ENCODE measurements at regions of chr7 and their contacts with region 1.

Region 1: GRCh38 chr7:117119192-117119924 is 166.1 kb downstream of the ST7 start:
- DNase-seq: peak; percentile 73 to 81
- H3K4me3 ChIP-seq: no peak overlapping the region
- H3K27ac ChIP-seq: no peak overlapping the region
- H3K4me1 ChIP-seq: no peaks in the 10 kb centered on the region
- H3K27me3 ChIP-seq: no peaks in the 10 kb centered on the region
- CTCF ChIP-seq: peak; percentile 78 to 80 (median 79)
- POLR2A ChIP-seq: no peak

Region 2: GRCh38 chr7:116478834-116479233 is 640.5 kb before region 1 on chr7:
- intact Hi-C with region 1: no loop called
- DNase-seq: no peak
- H3K4me3 ChIP-seq: no peak overlapping the region
- H3K27ac ChIP-seq: no peak overlapping the region
- H3K4me1 ChIP-seq: no peaks in the 10 kb centered on the region
- H3K27me3 ChIP-seq: no peaks in the 10 kb centered on the region
- CTCF ChIP-seq: no peak
- POLR2A ChIP-seq: no peak

Region 3: DNA sequence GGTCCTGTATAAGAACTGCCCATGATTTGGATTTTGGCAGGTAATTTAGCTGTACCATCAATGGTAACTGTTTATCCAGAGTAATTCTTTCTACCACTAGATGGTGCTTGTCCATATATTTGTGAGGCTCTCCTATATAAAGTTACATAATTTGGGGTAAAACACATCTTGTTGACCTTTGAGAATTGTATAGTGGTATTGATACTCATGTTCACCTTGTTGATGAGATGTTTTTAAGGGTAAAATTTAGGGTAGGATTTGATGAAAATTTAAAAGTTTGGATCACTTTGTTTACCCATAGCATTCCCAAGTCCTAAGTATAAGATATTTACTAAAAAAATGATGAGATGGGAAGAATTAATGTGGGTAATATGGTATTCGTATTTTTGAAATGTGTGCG is 134.4 kb before region 1 on chr7:
- intact Hi-C with region 1: loop called (anchors 10 kb)
- DNase-seq: no peak
- H3K4me3 ChIP-seq: no peak overlapping the region
- H3K27ac ChIP-seq: no peak overlapping the region
- H3K4me1 ChIP-seq: no peaks in the 10 kb centered on the region
- H3K27me3 ChIP-seq: no peaks in the 10 kb centered on the region
- CTCF ChIP-seq: peak; percentile 54 to 63 (median 56)
- POLR2A ChIP-seq: no peak

Region 4: DNA sequence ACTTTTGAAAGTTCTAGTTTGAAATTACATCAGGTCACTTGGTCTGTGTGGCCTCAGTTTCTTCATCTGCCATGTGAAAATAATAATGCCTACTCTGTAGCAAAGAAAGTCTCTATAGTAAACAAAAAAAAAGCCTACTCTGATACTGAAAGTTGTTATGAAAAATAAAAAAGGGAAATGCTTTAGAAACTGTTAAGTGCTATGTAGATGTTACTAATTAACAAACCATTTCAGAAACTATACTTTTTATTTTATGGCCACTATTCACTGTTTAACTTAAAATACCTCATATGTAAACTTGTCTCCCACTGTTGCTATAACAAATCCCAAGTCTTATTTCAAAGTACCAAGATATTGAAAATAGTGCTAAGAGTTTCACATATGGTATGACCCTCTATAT is 411.0 kb after region 1 on chr7:
- intact Hi-C with region 1: no loop called
- DNase-seq: no peak
- H3K4me3 ChIP-seq: no peak overlapping the region
- H3K27ac ChIP-seq: no peak overlapping the region
- H3K4me1 ChIP-seq: no peaks in the 10 kb centered on the region
- H3K27me3 ChIP-seq: no peaks in the 10 kb centered on the region
- CTCF ChIP-seq: no peak
- POLR2A ChIP-seq: no peak